GM10248 (cell line): ENCODE measurements at regions of chr17 and their contacts with region 1.

Region 1: GRCh38 chr17:50865984-50866774 is at the start of gene TOB1:
- DNase-seq: peak; percentile 97
- CTCF ChIP-seq: no peak

Region 2: GRCh38 chr17:50828508-50829170 is 37.5 kb before region 1 on chr17:
- CTCF ChIA-PET with region 1: no interaction called
- POLR2A ChIA-PET with region 1: interaction called, 19 read pairs
- DNase-seq: peak; percentile 78
- CTCF ChIP-seq: no peak

Region 3: DNA sequence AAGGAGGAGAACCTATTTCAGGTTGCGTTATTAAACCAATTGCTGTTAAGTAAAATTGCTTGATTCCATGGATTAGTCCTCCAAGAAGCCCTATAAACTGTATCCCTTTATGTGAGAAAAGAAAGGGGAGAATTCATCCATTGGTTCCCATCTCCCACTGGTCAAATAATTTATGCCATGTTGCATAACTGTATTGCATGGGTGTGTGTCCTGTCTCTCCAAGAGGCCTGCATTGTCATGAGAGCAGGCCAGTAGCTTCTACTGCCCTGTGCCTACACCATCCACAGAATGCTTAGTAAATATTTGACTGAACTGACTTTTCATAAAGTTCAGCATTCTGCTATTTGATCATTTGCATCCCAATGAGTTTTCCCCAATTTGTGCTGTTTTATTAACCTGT is 11.7 kb after region 1 on chr17:
- CTCF ChIA-PET with region 1: interaction called, 3 read pairs
- POLR2A ChIA-PET with region 1: interaction called, 17 read pairs
- DNase-seq: no peak
- CTCF ChIP-seq: no peak

Region 4: DNA sequence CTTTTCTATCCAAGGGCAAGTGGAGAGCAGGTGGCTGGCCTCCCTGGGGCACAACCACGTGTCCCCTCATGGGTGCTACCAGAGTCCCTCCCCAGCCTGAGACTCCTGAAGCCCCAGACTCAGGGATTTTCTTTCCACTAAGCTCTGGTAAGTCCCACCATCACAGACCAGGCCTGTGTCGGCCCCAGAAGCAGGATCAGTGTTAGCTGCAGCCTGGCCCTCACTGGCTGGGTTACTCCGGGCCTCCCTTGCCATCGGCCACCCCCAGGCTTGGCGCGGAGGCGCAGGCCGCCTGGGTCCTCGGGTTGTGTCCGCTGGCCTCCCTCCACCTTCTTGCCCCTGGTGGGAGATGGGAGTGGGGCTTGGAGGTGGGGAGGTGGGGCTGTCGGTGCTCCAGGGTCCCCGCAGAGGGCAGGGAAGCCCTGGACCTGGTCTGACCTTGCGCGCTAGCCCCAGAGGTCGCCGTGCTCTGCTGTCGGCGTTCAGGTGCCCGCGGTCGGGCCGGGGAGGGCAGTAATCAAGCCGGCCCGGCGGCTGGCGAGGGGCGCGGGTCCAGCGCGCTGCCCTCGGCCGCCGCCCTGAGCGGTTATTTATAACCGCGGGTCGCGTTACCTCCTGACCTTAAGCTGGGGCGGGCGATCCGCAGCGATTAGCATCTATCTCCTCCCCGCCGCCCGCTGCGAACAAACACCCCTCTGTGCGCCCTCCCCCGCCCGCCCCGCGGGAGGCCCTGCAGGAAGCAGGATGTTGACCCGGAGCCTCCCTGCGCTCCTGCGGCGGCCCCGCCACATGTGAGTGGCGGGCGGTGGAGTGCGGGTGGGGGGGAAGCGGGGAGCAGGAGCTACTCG is 78.1 kb after region 1 on chr17:
- CTCF ChIA-PET with region 1: interaction called, 62 read pairs
- POLR2A ChIA-PET with region 1: interaction called, 11 read pairs
- DNase-seq: peak; percentile 71
- CTCF ChIP-seq: no peak

Region 5: GRCh38 chr17:50956750-50957523 is 90.8 kb after region 1 on chr17:
- CTCF ChIA-PET with region 1: interaction called, 62 read pairs
- POLR2A ChIA-PET with region 1: interaction called, 19 read pairs
- DNase-seq: peak; percentile 74
- CTCF ChIP-seq: peak; percentile 82